ENCODE measurements at regions of chr16 and their contacts with region 1.

Region 1: GRCh38 chr16:57167953-57168352 is 17.9 kb downstream of the PSME3IP1 start:
- DNase-seq: no peak
- H3K4me3 ChIP-seq: no peak overlapping the region
- H3K27ac ChIP-seq: no peak overlapping the region
- H3K4me1 ChIP-seq: no peaks in the 10 kb centered on the region
- H3K27me3 ChIP-seq: no peaks in the 10 kb centered on the region
- CTCF ChIP-seq: peak; percentile 20 to 48 (median 40)
- POLR2A ChIP-seq: no peak

Region 2: GRCh38 chr16:57091975-57092785 is 75.8 kb before region 1 on chr16 and contains the start of gene CPNE2:
- intact Hi-C with region 1: loop called (anchors 5 kb)
- DNase-seq: peak; percentile 48
- H3K4me3 ChIP-seq: peak within 1 kb of the TSS; percentile 66 to 75
- H3K27ac ChIP-seq: peak within 1 kb of the TSS; percentile 64 to 74
- H3K4me1 ChIP-seq: peaks cover 9% of the 10 kb centered on the region
- H3K27me3 ChIP-seq: no peaks in the 10 kb centered on the region
- CTCF ChIP-seq: no peak
- POLR2A ChIP-seq: no peak
- total RNA-seq, gene CPNE2: 18.3 to 25.2 TPM

Region 3: GRCh38 chr16:57178793-57179212 is 10.8 kb after region 1 on chr16:
- intact Hi-C with region 1: no loop called
- DNase-seq: no peak
- H3K4me3 ChIP-seq: no peak overlapping the region
- H3K27ac ChIP-seq: no peak overlapping the region
- H3K4me1 ChIP-seq: no peaks in the 10 kb centered on the region
- H3K27me3 ChIP-seq: no peaks in the 10 kb centered on the region
- CTCF ChIP-seq: no peak
- POLR2A ChIP-seq: no peak

Region 4: DNA sequence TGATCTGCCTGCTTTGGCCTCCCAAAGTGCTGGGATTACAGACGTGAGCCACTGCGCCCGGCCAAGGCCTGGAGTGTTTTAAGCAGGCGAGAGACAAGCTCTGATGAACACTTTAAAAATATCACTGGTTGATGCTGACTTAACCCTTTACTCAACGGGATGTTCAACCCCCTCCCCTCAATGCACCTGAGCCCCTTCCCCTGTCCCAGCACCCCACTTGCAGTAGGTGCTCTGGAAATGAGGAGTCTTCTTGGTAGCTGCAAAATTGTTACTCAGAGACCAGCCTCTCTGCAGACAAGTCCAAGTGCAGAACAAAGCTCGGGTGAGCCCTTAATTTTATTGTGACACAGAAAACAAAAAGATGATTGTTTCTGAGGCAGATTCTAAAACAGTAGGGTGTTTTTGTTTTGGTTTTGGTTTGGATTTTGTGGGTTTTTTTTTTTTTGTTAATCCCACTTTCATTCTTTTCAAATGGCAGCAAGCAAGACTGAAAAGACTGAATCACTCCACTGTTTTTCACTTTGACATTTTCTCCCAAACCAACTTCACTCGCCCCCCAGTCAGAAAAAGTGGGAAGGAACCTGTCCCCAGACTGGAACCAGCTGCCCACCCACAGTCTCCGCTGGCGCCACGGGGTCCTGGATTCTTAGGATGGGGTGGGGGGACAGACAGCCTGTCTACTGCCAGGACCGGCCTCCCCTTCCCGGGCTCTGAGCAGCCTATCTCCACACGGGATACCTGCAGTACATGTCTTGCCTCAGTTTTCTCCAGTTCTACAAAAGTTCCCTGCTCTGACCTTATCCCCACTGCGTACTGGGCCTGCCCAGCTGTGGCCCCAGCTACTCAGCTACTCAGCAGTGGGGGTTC is 121.7 kb after region 1 on chr16:
- intact Hi-C with region 1: no loop called
- DNase-seq: no peak
- H3K4me3 ChIP-seq: no peak overlapping the region
- H3K27ac ChIP-seq: peak overlapping the region; percentile 10 to 19
- H3K4me1 ChIP-seq: peaks cover 8% of the 10 kb centered on the region
- H3K27me3 ChIP-seq: no peaks in the 10 kb centered on the region
- CTCF ChIP-seq: no peak
- POLR2A ChIP-seq: no peak